MCF 10A (cell line): ENCODE measurements at regions of chr5 and their contacts with region 1.

Region 1: DNA sequence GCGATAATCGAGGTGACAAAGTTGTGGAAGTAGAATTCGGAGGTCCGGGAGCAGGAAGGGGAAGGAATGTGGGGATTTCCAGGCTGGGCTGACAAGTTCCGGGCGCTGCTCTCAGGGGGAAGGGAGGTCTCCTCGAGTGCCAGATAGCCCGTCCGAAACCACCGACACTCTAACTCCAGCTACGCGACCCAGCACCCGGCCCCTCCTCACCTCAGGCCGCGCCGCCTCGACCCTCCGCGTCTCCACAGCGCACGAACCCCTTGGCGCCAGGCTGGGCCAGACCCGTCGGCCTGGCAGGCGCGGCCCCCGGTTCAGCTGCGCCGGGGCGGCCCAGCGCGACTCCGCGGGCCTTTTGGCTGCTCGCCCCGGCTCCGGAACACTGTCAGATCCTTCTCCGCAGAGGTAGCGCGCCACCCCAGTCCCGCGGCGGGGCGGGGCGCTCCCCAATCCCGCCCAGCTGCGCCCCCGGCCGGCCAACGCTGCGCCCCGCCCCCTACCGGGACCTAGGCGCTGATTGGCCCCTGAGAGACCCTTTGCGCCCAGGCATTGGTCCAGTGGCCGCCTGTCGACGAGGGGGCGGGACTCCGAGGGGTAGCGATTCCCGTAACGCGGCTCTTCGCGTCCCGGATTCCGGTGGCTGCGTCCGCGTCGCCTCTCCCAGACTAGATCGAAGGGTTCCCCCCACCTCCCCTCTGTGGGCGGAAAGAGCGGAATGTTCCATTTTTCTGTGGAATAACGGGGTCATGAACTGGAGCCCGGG is at the start of gene IL6ST:
- DNase-seq: peak; percentile 98
- H3K4me3 Mint-ChIP-seq: peak within 1 kb of the TSS; percentile 89
- H3K27ac Mint-ChIP-seq: peak within 1 kb of the TSS; percentile 96
- H3K4me1 Mint-ChIP-seq: peaks cover 34% of the 10 kb centered on the region
- H3K27me3 Mint-ChIP-seq: no peaks in the 10 kb centered on the region
- CTCF ChIP-seq: no peak
- total RNA-seq, gene IL6ST: 108 and 115 TPM in 2 replicates

Region 2: DNA sequence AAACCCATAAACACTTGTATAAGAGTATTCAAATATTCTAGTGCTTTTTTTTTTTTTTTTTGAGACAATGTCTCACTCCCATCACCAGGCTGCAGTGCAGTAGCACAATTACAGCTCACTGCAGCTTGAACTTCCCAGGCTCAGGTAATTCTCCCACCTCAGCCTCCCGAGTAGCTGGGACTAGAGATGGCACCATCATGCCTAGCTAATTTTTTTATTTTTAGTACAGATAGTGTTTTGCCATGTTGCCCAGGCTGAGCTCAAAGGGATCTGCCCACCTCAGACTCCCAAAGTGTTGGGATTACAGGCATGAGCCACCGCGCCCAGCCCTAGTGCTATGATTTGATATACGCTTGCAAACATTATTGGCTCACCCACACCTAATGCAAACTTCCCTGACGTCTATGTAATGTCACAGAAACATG is 11.8 kb before region 1 on chr5:
- CTCF ChIA-PET with region 1: interaction called, 4 read pairs
- POLR2A ChIA-PET with region 1: interaction called, 21 read pairs
- intact Hi-C with region 1: no loop called
- DNase-seq: peak; percentile 26
- H3K4me3 Mint-ChIP-seq: no peak overlapping the region
- H3K27ac Mint-ChIP-seq: no peak overlapping the region
- H3K4me1 Mint-ChIP-seq: peaks cover 5% of the 10 kb centered on the region
- H3K27me3 Mint-ChIP-seq: no peaks in the 10 kb centered on the region
- CTCF ChIP-seq: peak; percentile 26

Region 3: GRCh38 chr5:56050551-56051255 is 55.9 kb after region 1 on chr5:
- CTCF ChIA-PET with region 1: no interaction called
- POLR2A ChIA-PET with region 1: interaction called, 9 read pairs
- intact Hi-C with region 1: loop called (anchors 10 kb)
- DNase-seq: no peak
- H3K4me3 Mint-ChIP-seq: no peak overlapping the region
- H3K27ac Mint-ChIP-seq: no peak overlapping the region
- H3K4me1 Mint-ChIP-seq: peaks cover 10% of the 10 kb centered on the region
- H3K27me3 Mint-ChIP-seq: peaks cover 10% of the 10 kb centered on the region
- CTCF ChIP-seq: no peak

Region 4: DNA sequence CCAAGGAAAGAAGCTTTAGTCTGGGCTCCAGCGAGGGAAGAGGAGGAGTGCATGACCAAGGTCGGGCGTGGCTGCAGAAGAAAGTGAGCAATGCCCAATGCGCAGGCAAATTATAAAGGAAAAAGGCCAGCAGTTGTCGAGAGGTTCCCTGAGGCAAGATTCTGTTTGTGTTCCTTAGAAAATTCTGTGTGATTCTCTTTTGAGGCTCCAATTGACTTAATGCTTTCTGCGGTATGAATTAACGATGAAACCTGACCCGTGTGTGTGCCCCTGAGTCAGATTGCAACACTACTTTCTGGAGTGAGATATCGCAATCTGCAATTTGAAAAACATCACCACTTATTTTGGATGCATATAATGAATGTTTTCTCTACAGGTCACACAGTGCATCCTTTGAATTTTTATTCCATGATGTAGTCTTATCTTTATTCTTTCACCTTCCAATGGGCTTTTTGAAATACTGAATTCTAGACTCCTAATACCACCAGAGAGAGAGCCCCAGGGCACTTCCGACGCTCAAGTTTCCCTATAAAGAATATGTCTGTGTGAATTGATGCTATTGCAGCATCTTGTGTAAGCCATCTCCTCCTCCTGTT is 117.9 kb after region 1 on chr5:
- CTCF ChIA-PET with region 1: no interaction called
- POLR2A ChIA-PET with region 1: interaction called, 5 read pairs
- intact Hi-C with region 1: loop called (anchors 1 kb)
- DNase-seq: peak; percentile 96
- H3K4me3 Mint-ChIP-seq: peak overlapping the region; percentile 21
- H3K27ac Mint-ChIP-seq: peak overlapping the region; percentile 54
- H3K4me1 Mint-ChIP-seq: peaks cover 17% of the 10 kb centered on the region
- H3K27me3 Mint-ChIP-seq: no peaks in the 10 kb centered on the region
- CTCF ChIP-seq: no peak

Region 5: DNA sequence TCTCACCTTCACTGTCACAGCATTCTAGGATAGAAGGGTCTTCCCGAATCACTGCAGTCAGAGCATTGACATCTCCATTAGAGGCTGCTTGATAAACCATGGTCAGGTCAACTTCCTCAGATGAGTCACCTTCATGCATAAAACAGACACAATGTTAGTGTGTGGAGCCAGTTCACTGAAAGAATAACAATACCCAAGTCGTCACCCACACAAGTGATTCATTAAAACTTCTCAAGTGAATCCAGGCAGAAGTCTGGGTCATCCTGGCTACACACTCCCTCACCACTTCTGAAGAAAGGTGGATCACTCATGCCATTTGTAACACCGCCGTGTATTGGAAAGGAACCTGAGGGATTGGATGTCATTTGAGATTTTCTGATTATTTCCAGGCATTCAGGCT is 188.8 kb after region 1 on chr5:
- CTCF ChIA-PET with region 1: no interaction called
- POLR2A ChIA-PET with region 1: no interaction called
- intact Hi-C with region 1: loop called (anchors 5 kb)
- DNase-seq: peak; percentile 89
- H3K4me3 Mint-ChIP-seq: no peak overlapping the region
- H3K27ac Mint-ChIP-seq: no peak overlapping the region
- H3K4me1 Mint-ChIP-seq: peaks cover 6% of the 10 kb centered on the region
- H3K27me3 Mint-ChIP-seq: no peaks in the 10 kb centered on the region
- CTCF ChIP-seq: no peak